Thyroid gland (tissue), 4 donors: ENCODE measurements at regions of chr19 and their contacts with region 1.

Region 1: DNA sequence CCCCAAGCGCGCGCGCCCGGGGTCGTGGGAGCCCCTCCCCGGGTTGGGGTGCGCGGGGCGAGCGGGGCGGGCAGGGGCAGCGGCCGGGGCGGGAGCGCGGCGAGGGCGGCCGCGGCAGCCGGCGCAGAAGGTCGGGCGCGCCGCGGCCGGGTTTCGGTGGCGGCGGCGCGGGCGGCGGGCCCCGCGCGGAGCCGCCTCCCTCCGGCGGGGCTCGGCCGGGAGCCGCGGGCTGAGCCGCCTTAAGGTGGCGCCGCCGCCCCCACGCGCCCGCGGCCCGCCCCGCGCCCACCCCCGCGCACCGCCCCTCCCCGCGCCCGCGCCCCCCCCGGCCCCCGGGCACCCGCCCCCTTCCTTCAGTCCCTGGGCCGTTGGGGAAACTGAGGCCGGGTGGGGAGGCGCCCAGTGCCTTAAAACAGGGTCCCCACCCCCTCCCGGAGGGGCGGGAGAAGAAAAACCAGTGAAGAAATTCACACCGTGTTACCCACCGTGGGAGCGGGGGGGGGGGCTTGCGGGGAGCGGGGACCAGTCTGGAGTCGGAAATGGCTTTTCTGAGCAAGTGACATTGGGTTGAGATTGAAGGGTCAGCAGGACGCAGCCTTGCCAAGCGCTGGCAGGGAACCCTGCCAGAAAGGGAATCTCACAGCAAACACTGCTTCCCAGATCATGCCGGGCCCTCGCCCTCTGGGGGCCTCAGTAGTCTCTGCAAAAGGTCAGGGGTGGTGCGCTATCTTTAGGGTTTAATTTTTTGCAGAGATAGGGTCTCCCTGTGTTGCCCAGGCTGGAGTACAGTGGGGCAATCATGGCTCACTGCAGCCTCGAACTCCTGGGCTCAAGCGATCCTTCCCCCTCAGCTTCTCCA is at the start of gene TLE2:
- DNase-seq: peak; percentile 58
- H3K4me3 ChIP-seq: peak within 1 kb of the TSS; percentile 59 to 71 (median 69)
- H3K27ac ChIP-seq: peak within 1 kb of the TSS; percentile 73 to 82 (median 78)
- H3K4me1 ChIP-seq: peaks cover 10 to 20% of the 10 kb centered on the region in 2 donors
- H3K27me3 ChIP-seq: no peaks in the 10 kb centered on the region
- CTCF ChIP-seq: no peak
- POLR2A ChIP-seq: no peak
- total RNA-seq, gene TLE2: 81.3 to 114 (median 90.3) TPM

Region 2: GRCh38 chr19:2986951-2987524 is 42.3 kb before region 1 on chr19:
- intact Hi-C with region 1: loop called (anchors 5 kb)
- DNase-seq: peak; percentile 61 to 63
- H3K4me3 ChIP-seq: no peak overlapping the region
- H3K27ac ChIP-seq: peak overlapping the region in 2 of 3 donors; percentile 9 to 17
- H3K4me1 ChIP-seq: peaks cover 31 to 37% of the 10 kb centered on the region in 2 donors
- H3K27me3 ChIP-seq: no peaks in the 10 kb centered on the region
- CTCF ChIP-seq: no peak
- POLR2A ChIP-seq: no peak